Panc1 (cell line): ENCODE measurements at regions of chr16 and their contacts with region 1.

Region 1: GRCh38 chr16:28112883-28113282 is 49.4 kb upstream of the GSG1L start:
- DNase-seq: no peak
- ATAC-seq: no peak
- H3K4me3 ChIP-seq: no peak overlapping the region
- H3K27ac ChIP-seq: no peak overlapping the region
- H3K4me1 ChIP-seq: no peaks in the 10 kb centered on the region
- H3K27me3 ChIP-seq: no peaks in the 10 kb centered on the region
- CTCF ChIP-seq: no peak

Region 2: GRCh38 chr16:28058839-28059589 is 53.9 kb before region 1 on chr16:
- CTCF ChIA-PET with region 1: no interaction called
- POLR2A ChIA-PET with region 1: no interaction called
- in situ Hi-C with region 1: no loop called
- intact Hi-C with region 1: no loop called
- DNase-seq: no peak
- ATAC-seq: no peak
- H3K4me3 ChIP-seq: no peak overlapping the region
- H3K27ac ChIP-seq: no peak overlapping the region
- H3K4me1 ChIP-seq: no peaks in the 10 kb centered on the region
- H3K27me3 ChIP-seq: peaks cover 16% of the 10 kb centered on the region
- CTCF ChIP-seq: no peak

Region 3: GRCh38 chr16:28237754-28238357 is 125.0 kb after region 1 on chr16:
- CTCF ChIA-PET with region 1: no interaction called
- POLR2A ChIA-PET with region 1: interaction called, 10 read pairs
- in situ Hi-C with region 1: no loop called
- intact Hi-C with region 1: no loop called
- DNase-seq: no peak
- ATAC-seq: no peak
- H3K4me3 ChIP-seq: no peak overlapping the region
- H3K27ac ChIP-seq: no peak overlapping the region
- H3K4me1 ChIP-seq: no peaks in the 10 kb centered on the region
- H3K27me3 ChIP-seq: no peaks in the 10 kb centered on the region
- CTCF ChIP-seq: no peak